ENCODE measurements at regions of chr2 and their contacts with region 1.

Region 1: GRCh38 chr2:100984892-100985379 is 17.2 kb upstream of the RPL31 start:
- DNase-seq: peak; percentile 87
- ATAC-seq: peak; percentile 81
- H3K4me3 ChIP-seq: no peak overlapping the region
- H3K27ac ChIP-seq: no peak overlapping the region
- H3K4me1 ChIP-seq: no peaks in the 10 kb centered on the region
- H3K27me3 ChIP-seq: no peaks in the 10 kb centered on the region
- CTCF ChIP-seq: peak; percentile 94

Region 2: GRCh38 chr2:100610381-100610831 is 374.5 kb before region 1 on chr2:
- intact Hi-C with region 1: loop called (anchors 5 kb)
- DNase-seq: peak; percentile 74
- ATAC-seq: peak; percentile 78
- H3K4me3 ChIP-seq: no peak overlapping the region
- H3K27ac ChIP-seq: no peak overlapping the region
- H3K4me1 ChIP-seq: no peaks in the 10 kb centered on the region
- H3K27me3 ChIP-seq: no peaks in the 10 kb centered on the region
- CTCF ChIP-seq: peak; percentile 53

Region 3: GRCh38 chr2:100721693-100722092 is 263.2 kb before region 1 on chr2:
- intact Hi-C with region 1: loop called (anchors 5 kb)
- DNase-seq: no peak
- ATAC-seq: no peak
- H3K4me3 ChIP-seq: no peak overlapping the region
- H3K27ac ChIP-seq: no peak overlapping the region
- H3K4me1 ChIP-seq: no peaks in the 10 kb centered on the region
- H3K27me3 ChIP-seq: no peaks in the 10 kb centered on the region
- CTCF ChIP-seq: no peak

Region 4: DNA sequence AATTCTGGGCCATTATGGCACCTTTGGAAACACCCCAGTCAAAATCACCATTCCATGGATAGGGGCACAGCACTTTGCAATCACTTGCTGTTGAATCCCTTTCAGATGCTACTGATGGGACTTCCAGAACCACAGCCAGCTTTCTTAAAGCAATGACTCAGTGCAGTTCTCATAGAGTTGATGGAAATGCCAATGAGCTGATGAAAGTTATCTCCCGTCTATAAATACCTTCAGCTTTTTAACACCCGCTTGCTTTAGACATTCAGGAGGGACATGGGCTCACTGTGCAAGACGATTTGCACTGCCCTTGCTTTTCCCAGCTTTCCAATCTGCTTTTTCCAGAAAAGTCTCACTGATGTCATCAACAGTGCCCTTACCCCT is 49.6 kb before region 1 on chr2:
- intact Hi-C with region 1: no loop called
- DNase-seq: no peak
- ATAC-seq: no peak
- H3K4me3 ChIP-seq: no peak overlapping the region
- H3K27ac ChIP-seq: no peak overlapping the region
- H3K4me1 ChIP-seq: no peaks in the 10 kb centered on the region
- H3K27me3 ChIP-seq: no peaks in the 10 kb centered on the region
- CTCF ChIP-seq: no peak

Region 5: DNA sequence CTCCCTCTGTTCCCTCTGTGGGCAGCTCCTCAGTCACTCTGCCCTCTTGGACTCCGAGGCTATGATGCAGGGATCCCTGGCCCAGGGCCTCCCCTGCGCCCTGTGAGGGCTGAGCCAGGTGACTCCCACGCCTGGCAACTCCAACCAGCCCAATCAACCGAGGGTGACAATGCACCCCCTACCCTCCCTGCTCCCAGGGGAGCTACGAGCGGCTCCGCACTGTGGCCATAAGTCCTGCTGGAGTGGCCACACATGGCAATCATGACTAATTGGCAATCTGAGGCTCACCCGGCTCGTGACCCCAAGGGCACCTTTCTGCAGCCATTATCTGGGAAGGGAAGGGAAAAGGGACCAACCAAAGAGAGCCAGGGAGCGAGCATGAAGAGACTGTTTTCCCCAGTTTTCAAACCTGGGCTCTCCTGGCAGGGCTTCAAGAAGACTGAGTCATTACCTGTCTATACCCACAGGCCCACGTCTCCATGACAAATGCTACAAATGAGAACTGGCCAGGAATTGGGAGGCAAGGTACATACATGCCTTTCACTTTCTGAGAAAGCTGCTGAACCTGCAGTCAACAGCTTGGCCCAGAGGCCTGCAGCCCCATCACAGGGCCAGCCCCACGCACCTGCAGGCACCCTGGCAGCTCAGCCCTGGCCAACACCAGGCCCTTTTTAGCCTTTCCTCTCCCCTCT is 62.3 kb after region 1 on chr2:
- intact Hi-C with region 1: no loop called
- DNase-seq: no peak
- ATAC-seq: peak; percentile 21
- H3K4me3 ChIP-seq: no peak overlapping the region
- H3K27ac ChIP-seq: no peak overlapping the region
- H3K4me1 ChIP-seq: peaks cover 6% of the 10 kb centered on the region
- H3K27me3 ChIP-seq: no peaks in the 10 kb centered on the region
- CTCF ChIP-seq: no peak

Region 6: DNA sequence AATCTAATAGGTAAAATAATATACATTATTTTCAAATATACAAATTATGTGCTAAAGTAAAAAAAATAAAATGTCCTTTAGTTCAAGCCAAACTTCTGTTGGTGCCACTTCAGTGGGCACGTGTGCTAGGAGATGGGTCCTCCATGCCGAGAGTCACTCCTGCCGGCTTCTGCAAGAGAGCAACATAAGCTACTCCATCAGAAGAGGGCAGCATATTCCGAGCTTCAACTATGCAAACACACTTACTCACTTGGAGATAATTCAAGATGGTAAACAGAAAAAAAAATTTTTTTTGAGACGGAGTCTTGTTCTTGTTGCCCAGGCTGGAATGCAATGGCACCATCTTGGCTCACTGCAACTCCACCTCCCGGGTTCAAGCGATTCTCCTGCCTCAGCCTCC is 292.2 kb after region 1 on chr2:
- intact Hi-C with region 1: no loop called
- DNase-seq: no peak
- ATAC-seq: peak; percentile 95
- H3K4me3 ChIP-seq: no peak overlapping the region
- H3K27ac ChIP-seq: no peak overlapping the region
- H3K4me1 ChIP-seq: peaks cover 8% of the 10 kb centered on the region
- H3K27me3 ChIP-seq: no peaks in the 10 kb centered on the region
- CTCF ChIP-seq: no peak

Region 7: DNA sequence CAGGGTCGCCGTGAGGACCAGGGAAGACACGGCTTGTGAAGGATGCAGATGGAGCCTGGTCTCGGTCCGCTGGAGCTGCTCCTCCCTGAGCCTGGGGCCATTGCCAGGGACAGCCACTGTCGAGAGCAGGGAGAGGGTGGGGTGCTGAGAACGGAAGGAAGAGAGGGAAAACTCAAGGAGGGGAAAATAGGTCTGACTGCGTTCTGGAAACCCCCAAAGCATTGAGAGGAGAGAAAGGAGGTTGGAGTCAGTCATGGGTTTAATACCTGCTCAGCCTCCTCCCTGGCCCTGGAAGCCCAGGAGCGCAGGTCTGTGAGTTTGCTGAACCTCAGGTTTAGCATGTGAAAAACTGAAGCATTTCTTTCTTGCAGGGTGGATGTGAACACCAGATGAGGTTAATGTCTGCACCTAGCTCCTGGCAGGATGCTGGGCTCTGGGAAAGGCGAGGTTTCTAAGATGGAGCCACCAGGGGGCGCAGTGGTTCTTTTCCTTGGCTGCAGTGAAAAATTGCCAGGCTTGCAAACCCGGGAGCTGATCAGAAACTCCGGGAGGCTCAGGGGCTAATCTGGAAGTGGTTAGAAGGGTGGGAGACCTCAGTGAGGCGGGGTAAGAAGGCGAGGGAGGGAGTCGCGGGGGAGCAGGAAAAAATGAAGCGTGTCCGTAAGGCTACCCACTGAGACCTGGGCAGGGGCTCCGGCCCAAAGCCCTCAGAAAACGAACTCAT is 357.1 kb after region 1 on chr2:
- intact Hi-C with region 1: no loop called
- DNase-seq: peak; percentile 83
- ATAC-seq: peak; percentile 84
- H3K4me3 ChIP-seq: no peak overlapping the region
- H3K27ac ChIP-seq: no peak overlapping the region
- H3K4me1 ChIP-seq: peaks cover 20% of the 10 kb centered on the region
- H3K27me3 ChIP-seq: no peaks in the 10 kb centered on the region
- CTCF ChIP-seq: peak; percentile 87

Measured in upper lobe of right lung (tissue), 1 donor.